Cardiac septum (tissue), 1 donor: ENCODE measurements at regions of chr17 and their contacts with region 1.

Region 1: GRCh38 chr17:78708510-78708973 is 73.5 kb downstream of the CYTH1 start:
- DNase-seq: peak; percentile 84

Region 2: DNA sequence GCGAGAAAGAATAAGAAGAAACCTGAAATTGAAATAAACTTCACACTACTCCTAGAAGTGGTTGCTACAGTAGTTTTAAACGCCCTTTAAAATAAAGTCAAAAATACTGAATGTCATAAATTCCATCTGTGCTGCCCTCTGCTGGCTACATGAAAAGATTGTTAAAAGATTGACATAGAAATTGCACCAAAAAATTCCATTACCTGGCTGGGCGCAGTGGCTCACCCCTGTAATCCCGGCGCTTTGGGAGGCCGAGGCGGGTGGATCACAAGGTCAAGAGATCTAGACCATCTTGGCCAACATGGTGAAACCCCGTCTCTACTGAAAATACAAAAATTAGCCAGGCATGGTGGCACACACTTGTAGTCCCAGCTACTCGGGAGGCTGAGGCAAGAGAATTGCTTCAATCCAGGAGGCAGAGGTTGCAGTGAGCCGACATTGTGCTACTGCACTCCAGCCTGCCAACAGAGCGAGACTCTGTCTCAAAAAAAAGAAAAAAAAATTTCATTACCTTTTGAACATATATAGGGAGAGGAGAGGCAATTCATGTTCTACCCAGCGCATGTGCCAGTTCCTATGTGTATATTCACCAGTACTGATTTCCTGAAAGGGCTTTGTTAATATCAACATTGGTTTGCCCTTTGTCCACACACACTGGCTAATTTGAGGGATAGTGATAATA is 37.0 kb after region 1 on chr17:
- intact Hi-C with region 1: loop called (anchors 5 kb)
- DNase-seq: no peak